K562 (cell line): ENCODE measurements at regions of chr12 and their contacts with region 1.

Region 1: DNA sequence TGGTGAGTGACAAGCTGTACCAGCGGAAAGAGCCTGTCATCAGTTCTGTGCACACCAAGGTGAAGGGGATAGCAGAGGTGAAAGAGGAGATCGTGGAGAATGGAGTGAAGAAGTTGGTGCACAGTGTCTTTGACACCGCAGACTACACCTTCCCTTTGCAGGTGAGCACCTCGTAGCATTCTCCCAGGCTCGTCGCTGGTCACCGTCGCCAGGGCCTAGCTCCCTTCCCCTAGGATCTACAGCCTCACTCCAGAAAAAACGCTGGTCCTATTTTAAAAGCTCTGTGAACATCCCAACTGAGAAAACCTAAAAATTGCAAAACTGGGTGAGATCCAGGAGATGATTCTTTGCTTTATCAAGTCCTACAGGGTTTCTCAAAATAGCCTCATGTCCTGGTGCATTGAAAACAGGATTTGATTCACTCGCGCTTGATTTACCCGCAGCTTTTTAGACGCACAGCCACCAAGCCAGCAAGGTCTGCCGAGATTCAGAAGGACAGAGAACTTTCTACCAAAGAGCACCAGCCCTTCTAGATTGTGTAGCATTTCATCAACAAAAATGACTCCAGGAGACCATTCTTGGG is 22.2 kb downstream of the P2RX7 start:
- DNase-seq: no peak
- ATAC-seq: no peak
- H3K4me3 ChIP-seq: no peak overlapping the region
- H3K27ac ChIP-seq: no peak overlapping the region
- H3K4me1 ChIP-seq: peaks cover 0 to 6% of the 10 kb centered on the region in 2 experiments; a peak in 3 of 5 replicates
- H3K27me3 ChIP-seq: peaks cover 3 to 13% of the 10 kb centered on the region in 2 experiments; a peak in 2 of 5 replicates
- CTCF ChIP-seq: no peak
- EP300 ChIP-seq: no peak
- POLR2A ChIP-seq: no peak
- RAD21 ChIP-seq: no peak

Region 2: DNA sequence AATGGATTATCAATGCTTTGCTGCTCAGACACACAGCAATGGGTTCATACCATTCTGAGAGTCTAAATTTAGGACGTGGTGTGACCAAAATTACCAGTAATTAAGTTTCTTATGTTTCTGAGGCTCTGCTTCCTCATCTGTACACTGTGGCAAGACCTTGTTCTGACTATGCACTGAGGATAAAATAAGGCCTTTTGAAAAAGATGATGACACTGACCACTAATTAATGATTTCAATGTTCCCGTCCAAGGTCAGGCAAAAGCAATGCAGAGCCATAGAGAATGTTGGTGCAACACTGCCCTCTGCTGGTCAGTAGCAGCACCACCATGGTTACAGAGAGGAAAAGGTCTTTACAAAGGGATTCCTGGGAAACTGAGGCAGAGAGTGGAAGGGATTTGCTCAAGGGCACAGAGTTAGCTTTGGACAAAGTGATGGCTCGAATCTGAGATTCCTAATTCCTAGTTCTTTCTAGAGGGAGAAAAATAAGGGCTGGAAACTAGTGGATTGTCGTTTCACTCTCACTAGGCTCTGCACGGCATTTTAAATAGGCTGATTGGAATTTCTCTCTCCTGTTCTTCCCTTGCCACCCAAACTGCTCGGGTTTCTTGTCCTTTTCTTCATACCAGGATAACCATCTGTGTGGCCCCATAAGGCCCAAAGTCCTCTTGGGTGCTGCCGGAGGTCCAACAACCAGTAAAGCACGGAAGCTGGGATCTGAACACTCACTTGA is 44.5 kb before region 1 on chr12:
- CTCF ChIA-PET with region 1: no interaction called
- POLR2A ChIA-PET with region 1: no interaction called
- in situ Hi-C with region 1: no loop called
- intact Hi-C with region 1: no loop called
- DNase-seq: peak; percentile 65 to 80 (median 75)
- ATAC-seq: peak; percentile 92
- H3K4me3 ChIP-seq: no peak overlapping the region
- H3K27ac ChIP-seq: no peak overlapping the region
- H3K4me1 ChIP-seq: no peaks in the 10 kb centered on the region
- H3K27me3 ChIP-seq: peaks cover 2 to 14% of the 10 kb centered on the region in 2 experiments; a peak in 2 of 5 replicates
- CTCF ChIP-seq: peak; percentile 86 to 93 (median 92)
- EP300 ChIP-seq: no peak
- POLR2A ChIP-seq: no peak
- RAD21 ChIP-seq: peak; percentile 90 to 94

Region 3: GRCh38 chr12:121144416-121144914 is 10.4 kb before region 1 on chr12:
- CTCF ChIA-PET with region 1: no interaction called
- POLR2A ChIA-PET with region 1: interaction called, 14 read pairs
- in situ Hi-C with region 1: no loop called
- intact Hi-C with region 1: no loop called
- DNase-seq: no peak
- ATAC-seq: peak; percentile 49
- H3K4me3 ChIP-seq: no peak overlapping the region
- H3K27ac ChIP-seq: peak overlapping the region; percentile 40; the same call in 1 of the 3 replicates
- H3K4me1 ChIP-seq: peaks cover 5 to 17% of the 10 kb centered on the region in 2 experiments; a peak in 3 of 5 replicates
- H3K27me3 ChIP-seq: no peaks in the 10 kb centered on the region
- CTCF ChIP-seq: no peak
- EP300 ChIP-seq: no peak
- POLR2A ChIP-seq: no peak
- RAD21 ChIP-seq: no peak